ENCODE measurements at regions of chr12 and their contacts with region 1.

Region 1: DNA sequence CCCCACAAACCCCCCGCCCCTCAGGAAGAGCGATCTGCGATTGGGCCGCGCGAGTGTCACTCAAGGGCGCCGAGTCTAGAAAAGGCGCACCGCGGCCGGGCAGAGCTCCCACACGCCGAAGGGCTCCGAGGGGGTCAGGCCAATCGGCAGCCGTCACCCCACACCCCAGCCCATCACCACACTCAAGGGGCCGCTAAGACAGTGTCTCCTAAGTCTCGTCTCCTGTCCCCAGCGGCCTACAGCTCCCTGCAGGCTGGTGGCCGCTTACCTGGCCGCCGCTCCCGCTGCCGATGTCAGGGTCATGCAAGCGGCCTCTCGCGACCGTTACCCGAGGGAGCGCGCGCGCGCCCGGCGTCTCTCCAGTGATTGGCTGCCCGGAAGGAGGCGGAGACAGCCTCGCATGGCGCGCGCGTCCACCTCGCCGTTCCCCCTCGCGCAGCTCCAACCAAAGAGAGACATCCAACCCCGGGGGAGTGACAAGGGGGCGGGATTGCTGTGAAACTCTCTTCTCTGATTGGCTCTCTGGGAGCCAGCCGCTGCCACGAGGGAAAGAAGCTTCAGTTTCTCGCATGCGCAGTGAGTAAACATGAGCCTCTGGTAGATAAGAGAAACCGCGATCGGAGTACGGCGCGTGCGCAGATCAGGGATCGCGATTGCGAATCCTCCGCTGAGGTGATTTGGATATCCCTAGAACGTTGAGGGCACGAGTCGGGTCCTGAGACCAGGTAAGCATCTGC is at the starts of genes MPHOSPH9 and MTRFR:
- DNase-seq: peak; percentile 99
- H3K4me3 ChIP-seq: peak within 1 kb of the TSS; percentile 99
- H3K27ac ChIP-seq: peak within 1 kb of the TSS; percentile 76
- H3K27me3 ChIP-seq: no peaks in the 10 kb centered on the region
- CTCF ChIP-seq: no peak
- polyA plus RNA-seq, gene MPHOSPH9: 15.4 and 20.3 TPM in 2 replicates
- polyA plus RNA-seq, gene MTRFR: 9.4 TPM in 2 replicates

Region 2: GRCh38 chr12:122730215-122731014 is 502.6 kb before region 1 on chr12 and contains the start of gene HCAR1:
- CTCF ChIA-PET with region 1: no interaction called
- POLR2A ChIA-PET with region 1: no interaction called
- DNase-seq: no peak
- H3K4me3 ChIP-seq: no peak within 1 kb of the TSS
- H3K27ac ChIP-seq: no peak within 1 kb of the TSS
- H3K27me3 ChIP-seq: peaks cover 15% of the 10 kb centered on the region
- CTCF ChIP-seq: peak; percentile 2; the same call in 1 of the 2 replicates
- polyA plus RNA-seq, gene HCAR1: 0.02 and 0.05 TPM in 2 replicates

Region 3: DNA sequence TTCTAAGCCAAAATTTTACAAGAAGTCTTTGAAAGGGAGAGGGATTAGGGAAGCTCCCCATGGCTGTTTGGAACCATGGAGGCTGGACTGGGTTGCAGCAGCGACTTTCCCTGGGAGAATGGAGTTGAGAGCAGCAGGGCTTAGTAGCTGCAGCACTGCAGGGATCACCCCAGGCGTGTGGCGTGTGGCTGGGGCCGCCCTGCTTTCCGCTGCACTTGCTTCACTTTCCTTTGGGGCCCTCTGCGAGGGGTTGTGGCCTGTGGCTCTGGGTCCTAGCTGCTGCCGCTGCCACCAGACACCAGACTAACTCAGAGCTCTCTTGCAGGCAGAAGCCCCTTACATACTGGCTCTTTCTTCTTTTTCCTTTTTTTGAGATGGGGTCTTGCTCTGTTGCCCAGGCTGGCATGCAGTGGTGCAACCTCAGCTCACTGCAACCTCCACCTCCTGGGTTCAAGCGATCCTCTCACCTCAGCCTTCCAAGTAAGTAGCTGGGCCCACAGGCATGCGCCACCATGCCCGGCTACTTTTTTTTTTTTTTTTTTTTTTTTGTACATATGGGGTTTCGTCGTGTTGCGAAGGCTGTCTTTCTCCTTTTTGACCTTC is 433.2 kb before region 1 on chr12:
- CTCF ChIA-PET with region 1: interaction called, 31 read pairs
- POLR2A ChIA-PET with region 1: no interaction called
- DNase-seq: no peak
- H3K4me3 ChIP-seq: no peak overlapping the region
- H3K27ac ChIP-seq: no peak overlapping the region
- H3K27me3 ChIP-seq: no peaks in the 10 kb centered on the region
- CTCF ChIP-seq: no peak

Region 4: GRCh38 chr12:122965851-122966722 is 266.9 kb before region 1 on chr12 and contains the start of gene ABCB9:
- CTCF ChIA-PET with region 1: interaction called, 10 read pairs
- POLR2A ChIA-PET with region 1: interaction called, 17 read pairs
- DNase-seq: peak; percentile 72
- H3K4me3 ChIP-seq: peak within 1 kb of the TSS; percentile 82
- H3K27ac ChIP-seq: no peak within 1 kb of the TSS
- H3K27me3 ChIP-seq: no peaks in the 10 kb centered on the region
- CTCF ChIP-seq: no peak
- polyA plus RNA-seq, gene ABCB9: 3.4 and 5.0 TPM in 2 replicates

Region 5: DNA sequence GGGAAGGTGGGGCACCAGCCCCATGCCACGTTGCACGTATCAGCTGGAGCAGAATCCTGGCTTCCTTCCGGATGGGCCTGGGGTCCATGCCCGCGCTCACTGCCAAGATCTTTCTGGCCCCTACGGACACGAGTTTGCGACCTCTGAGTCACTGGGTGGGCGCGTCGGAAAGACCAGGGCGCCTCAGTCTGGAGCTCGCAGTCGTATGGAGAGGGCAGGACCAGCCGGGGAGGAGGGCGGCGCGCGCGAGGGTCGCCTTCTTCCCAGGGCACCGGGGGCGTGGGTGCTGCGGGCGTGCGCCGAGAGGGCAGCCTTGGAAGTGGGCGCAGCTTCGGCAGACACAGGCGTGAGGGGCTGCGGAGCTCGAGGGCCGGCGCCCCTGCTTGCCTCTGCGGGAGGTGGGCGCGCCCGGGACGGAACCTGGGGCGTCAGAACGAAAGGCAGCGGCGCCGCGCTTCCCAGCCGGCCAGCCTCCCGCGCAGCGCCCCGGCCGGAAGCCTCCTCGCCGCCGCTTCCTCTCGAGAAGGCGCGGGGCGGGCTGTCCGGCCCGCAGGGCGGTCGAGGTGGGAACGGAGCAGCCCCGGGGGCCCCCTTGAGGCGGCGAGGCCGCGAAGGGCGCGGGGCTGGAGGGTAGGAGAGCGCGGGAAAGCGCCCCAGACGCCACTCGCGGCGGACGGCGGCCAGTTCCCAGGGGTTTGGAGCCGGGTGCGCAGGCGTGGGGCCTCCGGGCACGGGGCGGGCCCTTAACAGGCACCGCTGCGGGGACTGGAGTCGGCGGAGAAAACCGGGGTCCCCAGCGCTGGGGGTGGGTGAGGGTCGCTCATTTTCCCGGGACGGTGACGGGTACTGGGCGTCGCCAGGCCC is 252.6 kb before region 1 on chr12 and contains the start of gene ARL6IP4:
- CTCF ChIA-PET with region 1: interaction called, 39 read pairs
- POLR2A ChIA-PET with region 1: interaction called, 26 read pairs
- DNase-seq: no peak
- H3K4me3 ChIP-seq: peak within 1 kb of the TSS; percentile 90
- H3K27ac ChIP-seq: peak within 1 kb of the TSS; percentile 75
- H3K27me3 ChIP-seq: no peaks in the 10 kb centered on the region
- CTCF ChIP-seq: no peak
- polyA plus RNA-seq, gene ARL6IP4: 185 and 209 TPM in 2 replicates

Region 6: DNA sequence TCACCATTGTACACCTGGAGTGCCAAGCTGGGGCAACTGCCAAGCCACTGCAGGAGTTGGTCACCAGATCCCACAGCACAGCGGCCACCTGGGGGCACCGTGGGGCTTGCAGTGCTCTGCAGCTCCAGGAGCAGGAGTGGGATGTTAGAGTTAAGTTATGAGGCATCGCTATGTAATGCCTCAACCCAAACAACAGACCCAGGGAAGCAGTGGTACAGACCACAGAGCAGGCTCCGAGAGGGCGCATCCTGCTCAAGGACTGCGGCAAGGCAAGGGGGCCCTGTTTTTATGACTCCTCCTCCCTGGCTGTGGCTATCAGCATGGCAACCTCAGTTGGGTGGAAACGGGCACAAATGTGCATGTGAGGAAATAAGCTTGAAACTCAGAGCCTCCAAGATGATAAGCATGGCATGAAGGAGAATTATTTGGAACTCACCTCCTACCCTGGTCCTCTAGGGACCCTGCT is 189.4 kb before region 1 on chr12:
- CTCF ChIA-PET with region 1: interaction called, 41 read pairs
- POLR2A ChIA-PET with region 1: interaction called, 56 read pairs
- DNase-seq: peak; percentile 96
- H3K4me3 ChIP-seq: no peak overlapping the region
- H3K27ac ChIP-seq: peak overlapping the region; percentile 85
- H3K27me3 ChIP-seq: no peaks in the 10 kb centered on the region
- CTCF ChIP-seq: peak; percentile 85

Region 7: GRCh38 chr12:123267991-123268843 is 35.2 kb after region 1 on chr12:
- CTCF ChIA-PET with region 1: interaction called, 5 read pairs
- POLR2A ChIA-PET with region 1: interaction called, 17 read pairs
- DNase-seq: no peak
- H3K4me3 ChIP-seq: no peak overlapping the region
- H3K27ac ChIP-seq: peak overlapping the region; percentile 11
- H3K27me3 ChIP-seq: no peaks in the 10 kb centered on the region
- CTCF ChIP-seq: no peak